ENCODE measurements at regions of chr17 and their contacts with region 1.

Region 1: DNA sequence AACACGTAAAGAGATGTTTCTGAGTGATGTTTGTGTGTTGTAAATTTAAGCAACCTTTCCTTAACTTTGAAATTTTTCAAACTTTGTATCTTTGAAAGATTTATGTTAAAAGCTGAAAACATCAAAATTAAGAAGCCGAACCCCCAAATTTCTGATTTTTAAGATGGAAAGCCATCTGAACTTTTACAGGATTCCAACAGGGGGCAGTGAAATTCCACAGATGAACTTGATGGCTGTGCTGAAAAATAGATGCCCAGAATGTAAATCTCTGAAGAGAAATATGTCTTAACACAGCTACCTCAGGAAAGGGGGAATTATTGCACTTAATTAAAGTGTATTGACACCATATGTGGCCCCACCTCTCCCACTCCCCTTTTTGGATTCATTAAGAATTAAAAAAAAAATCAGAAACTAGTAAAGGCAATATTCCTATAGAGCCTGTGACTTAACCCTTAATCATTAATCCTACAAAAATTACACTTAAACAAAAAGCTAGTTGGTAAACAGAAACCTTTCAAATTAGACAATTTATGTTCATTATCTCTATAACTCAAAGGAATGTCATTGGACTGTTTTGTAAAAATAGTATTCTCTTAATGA is 597.9 kb downstream of the KCNJ2 start:
- DNase-seq: peak; percentile 57
- ATAC-seq: no peak
- H3K4me3 ChIP-seq: no peak overlapping the region
- H3K27ac ChIP-seq: no peak overlapping the region
- H3K4me1 ChIP-seq: no peaks in the 10 kb centered on the region
- H3K27me3 ChIP-seq: no peaks in the 10 kb centered on the region
- CTCF ChIP-seq: peak; percentile 96

Region 2: DNA sequence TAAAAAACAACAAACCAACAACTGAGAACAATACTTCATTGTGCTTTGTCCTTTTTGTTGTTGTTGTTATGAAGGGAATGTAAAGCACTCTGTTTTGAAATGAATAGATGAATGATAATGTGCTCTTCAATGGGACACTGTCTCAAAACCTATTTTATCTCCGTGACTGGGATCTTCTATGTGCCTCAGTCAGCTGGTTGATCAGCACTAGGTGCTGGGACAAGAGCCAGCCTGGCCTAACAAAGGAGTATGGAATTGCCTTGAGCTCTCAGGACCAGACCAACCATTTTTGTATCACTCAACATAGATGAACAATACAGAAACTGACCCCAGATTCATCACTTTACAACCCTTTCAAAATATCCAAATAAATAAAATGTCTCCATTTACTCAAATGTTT is 157.6 kb before region 1 on chr17:
- CTCF ChIA-PET with region 1: no interaction called
- POLR2A ChIA-PET with region 1: no interaction called
- intact Hi-C with region 1: no loop called
- DNase-seq: no peak
- ATAC-seq: no peak
- H3K4me3 ChIP-seq: no peak overlapping the region
- H3K27ac ChIP-seq: no peak overlapping the region
- H3K4me1 ChIP-seq: 0 out of 2 replicates have a peak, but pooled peaks cover 7% of the 10 kb centered on the region
- H3K27me3 ChIP-seq: no peaks in the 10 kb centered on the region
- CTCF ChIP-seq: no peak

Region 3: GRCh38 chr17:70636517-70637133 is 130.6 kb before region 1 on chr17:
- CTCF ChIA-PET with region 1: no interaction called
- POLR2A ChIA-PET with region 1: no interaction called
- intact Hi-C with region 1: loop called (anchors 5 kb)
- DNase-seq: peak; percentile 80
- ATAC-seq: no peak; the same call in 1 of the 2 replicates
- H3K4me3 ChIP-seq: no peak overlapping the region
- H3K27ac ChIP-seq: no peak overlapping the region
- H3K4me1 ChIP-seq: no peaks in the 10 kb centered on the region
- H3K27me3 ChIP-seq: peaks cover 68% of the 10 kb centered on the region
- CTCF ChIP-seq: peak; percentile 86

Region 4: DNA sequence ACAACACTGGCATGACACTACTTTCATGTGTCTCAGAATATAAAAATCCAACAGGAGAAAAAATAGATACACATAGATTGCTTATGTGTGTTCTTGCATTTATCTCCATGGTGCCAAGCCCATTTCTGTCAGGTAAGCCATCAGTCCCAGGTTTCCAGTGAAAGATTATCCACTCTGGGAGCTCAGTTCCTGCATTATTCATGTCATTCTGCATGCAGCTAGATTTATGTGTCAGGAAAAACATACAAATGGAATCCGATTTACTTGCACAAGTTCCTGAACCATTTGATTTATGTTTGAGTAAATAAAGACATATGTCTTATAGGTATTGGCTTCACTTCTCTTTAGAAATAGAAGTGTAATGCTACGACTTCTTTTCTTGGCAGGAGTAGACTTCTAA is 28.1 kb before region 1 on chr17:
- CTCF ChIA-PET with region 1: no interaction called
- POLR2A ChIA-PET with region 1: no interaction called
- intact Hi-C with region 1: no loop called
- DNase-seq: no peak
- ATAC-seq: no peak
- H3K4me3 ChIP-seq: no peak overlapping the region
- H3K27ac ChIP-seq: no peak overlapping the region
- H3K4me1 ChIP-seq: no peaks in the 10 kb centered on the region
- H3K27me3 ChIP-seq: peaks cover 88% of the 10 kb centered on the region
- CTCF ChIP-seq: no peak

Region 5: GRCh38 chr17:71084219-71084618 is 317.0 kb after region 1 on chr17:
- CTCF ChIA-PET with region 1: interaction called, 15 read pairs
- POLR2A ChIA-PET with region 1: no interaction called
- intact Hi-C with region 1: loop called (anchors 1 kb)
- DNase-seq: peak; percentile 77
- ATAC-seq: peak; percentile 70
- H3K4me3 ChIP-seq: no peak overlapping the region
- H3K27ac ChIP-seq: no peak overlapping the region
- H3K4me1 ChIP-seq: no peaks in the 10 kb centered on the region
- H3K27me3 ChIP-seq: no peaks in the 10 kb centered on the region
- CTCF ChIP-seq: peak; percentile 85

Region 6: DNA sequence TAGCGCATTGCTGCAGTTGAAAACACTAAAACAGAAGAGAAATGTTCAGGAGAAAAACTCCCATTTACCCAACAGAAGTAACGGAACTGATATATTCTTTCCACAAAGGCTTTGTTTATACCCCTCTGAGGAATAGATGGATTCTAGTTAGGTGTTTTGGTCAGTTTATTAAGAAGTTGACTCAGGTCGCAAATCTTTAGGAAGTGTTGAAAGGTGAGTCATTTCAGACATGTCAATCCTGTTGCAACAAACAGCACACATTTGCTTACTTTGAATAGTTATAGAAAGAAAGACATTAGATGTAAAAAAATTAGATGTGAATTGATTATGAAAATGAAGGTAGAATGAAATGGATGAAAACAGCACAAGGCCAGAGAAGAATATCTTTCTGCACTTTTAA is 343.1 kb after region 1 on chr17:
- CTCF ChIA-PET with region 1: interaction called, 3 read pairs
- POLR2A ChIA-PET with region 1: no interaction called
- intact Hi-C with region 1: loop called (anchors 1 kb)
- DNase-seq: peak; percentile 49
- ATAC-seq: peak; percentile 55
- H3K4me3 ChIP-seq: no peak overlapping the region
- H3K27ac ChIP-seq: no peak overlapping the region
- H3K4me1 ChIP-seq: peaks cover 19% of the 10 kb centered on the region
- H3K27me3 ChIP-seq: no peaks in the 10 kb centered on the region
- CTCF ChIP-seq: no peak

Region 7: GRCh38 chr17:71237903-71238538 is 470.8 kb after region 1 on chr17:
- CTCF ChIA-PET with region 1: no interaction called
- POLR2A ChIA-PET with region 1: no interaction called
- intact Hi-C with region 1: loop called (anchors 5 kb)
- DNase-seq: peak; percentile 87
- ATAC-seq: peak; percentile 97
- H3K4me3 ChIP-seq: no peak overlapping the region
- H3K27ac ChIP-seq: peak overlapping the region; percentile 32
- H3K4me1 ChIP-seq: peaks cover 4% of the 10 kb centered on the region; the same call in 1 of the 2 replicates
- H3K27me3 ChIP-seq: no peaks in the 10 kb centered on the region
- CTCF ChIP-seq: peak; percentile 85

Region 8: DNA sequence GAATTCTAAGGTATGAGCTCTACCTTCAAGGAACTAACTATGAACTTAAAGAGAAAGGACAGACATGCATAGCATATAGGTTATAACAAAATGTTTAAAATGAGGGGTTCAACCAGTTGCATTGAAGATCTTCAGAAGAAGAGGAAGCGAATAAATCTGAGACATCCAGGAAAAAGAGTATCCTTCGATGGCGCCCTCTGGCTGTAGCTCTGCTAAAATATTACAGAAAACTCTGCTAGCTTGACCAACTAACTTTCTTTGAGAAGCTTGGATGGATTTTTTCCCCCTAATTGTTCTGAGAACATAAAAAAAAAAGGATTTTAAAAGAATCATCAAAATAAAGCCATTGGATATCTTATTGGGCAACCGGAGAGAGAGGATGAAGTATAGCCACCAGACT is 693.7 kb after region 1 on chr17:
- CTCF ChIA-PET with region 1: interaction called, 6 read pairs
- POLR2A ChIA-PET with region 1: no interaction called
- intact Hi-C with region 1: loop called (anchors 2 kb)
- DNase-seq: peak; percentile 74
- ATAC-seq: no peak
- H3K4me3 ChIP-seq: no peak overlapping the region
- H3K27ac ChIP-seq: no peak overlapping the region
- H3K4me1 ChIP-seq: no peaks in the 10 kb centered on the region
- H3K27me3 ChIP-seq: no peaks in the 10 kb centered on the region
- CTCF ChIP-seq: peak; percentile 89

Region 9: GRCh38 chr17:72539981-72540897 is 1773.0 kb after region 1 on chr17:
- CTCF ChIA-PET with region 1: no interaction called
- POLR2A ChIA-PET with region 1: no interaction called
- intact Hi-C with region 1: loop called (anchors 1 kb)
- DNase-seq: peak; percentile 90
- ATAC-seq: peak; percentile 98
- H3K4me3 ChIP-seq: peak overlapping the region; percentile 52
- H3K27ac ChIP-seq: peak overlapping the region; percentile 70
- H3K4me1 ChIP-seq: peaks cover 16% of the 10 kb centered on the region
- H3K27me3 ChIP-seq: no peaks in the 10 kb centered on the region
- CTCF ChIP-seq: peak; percentile 79